Calu3 (cell line): ENCODE measurements at regions of chr1 and their contacts with region 1.

Region 1: GRCh38 chr1:115469703-115470476 is 131.8 kb upstream of the NGF start:
- DNase-seq: peak; percentile 75
- H3K4me3 Mint-ChIP-seq: peak overlapping the region; percentile 45
- H3K27ac Mint-ChIP-seq: peak overlapping the region; percentile 56
- H3K4me1 Mint-ChIP-seq: no peaks in the 10 kb centered on the region
- H3K27me3 Mint-ChIP-seq: peaks cover 18% of the 10 kb centered on the region
- CTCF ChIP-seq: peak; percentile 87

Region 2: GRCh38 chr1:115138968-115139367 is 330.9 kb before region 1 on chr1:
- CTCF ChIA-PET with region 1: interaction called, 7 read pairs
- intact Hi-C with region 1: loop called (anchors 1 kb)
- DNase-seq: peak; percentile 80
- H3K4me3 Mint-ChIP-seq: no peak overlapping the region
- H3K27ac Mint-ChIP-seq: no peak overlapping the region
- H3K4me1 Mint-ChIP-seq: peaks cover 21% of the 10 kb centered on the region
- H3K27me3 Mint-ChIP-seq: peaks cover 14% of the 10 kb centered on the region
- CTCF ChIP-seq: peak; percentile 67

Region 3: GRCh38 chr1:115275212-115275611 is 194.7 kb before region 1 on chr1:
- CTCF ChIA-PET with region 1: interaction called, 6 read pairs
- intact Hi-C with region 1: loop called (anchors 5 kb)
- DNase-seq: no peak
- H3K4me3 Mint-ChIP-seq: no peak overlapping the region
- H3K27ac Mint-ChIP-seq: no peak overlapping the region
- H3K4me1 Mint-ChIP-seq: no peaks in the 10 kb centered on the region
- H3K27me3 Mint-ChIP-seq: peaks cover 60% of the 10 kb centered on the region
- CTCF ChIP-seq: peak; percentile 42

Region 4: DNA sequence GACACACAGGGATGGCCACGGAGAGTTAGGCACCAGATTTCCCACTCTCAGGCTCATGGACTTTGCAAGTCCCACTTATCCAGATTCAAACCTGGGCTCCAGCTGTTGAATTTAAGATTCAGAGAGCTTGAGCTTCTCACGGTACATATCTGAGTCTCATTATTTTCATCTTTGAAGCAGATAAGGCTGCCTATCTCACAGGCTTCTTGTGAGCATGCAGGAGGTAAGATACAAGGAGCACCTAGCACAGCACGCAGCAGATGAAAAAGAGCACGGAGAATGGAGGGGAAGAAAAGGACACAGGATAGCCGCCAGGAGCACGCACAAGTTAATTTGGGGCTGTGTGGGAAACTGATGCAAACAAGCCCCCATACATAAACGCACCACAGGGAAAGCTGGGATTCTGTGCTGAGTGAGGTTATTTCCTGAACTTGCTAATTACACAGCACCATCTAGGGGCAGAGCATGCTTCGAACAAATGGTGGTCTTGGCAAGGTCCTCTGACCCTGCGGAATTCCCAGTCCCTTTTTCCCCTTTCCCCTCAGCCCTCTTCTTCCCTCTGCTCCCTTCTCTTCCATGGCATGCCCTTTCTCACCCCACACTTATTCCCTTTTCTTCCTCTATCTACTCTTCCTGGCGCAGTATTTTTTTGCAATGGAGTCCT is 37.2 kb after region 1 on chr1:
- CTCF ChIA-PET with region 1: no interaction called
- intact Hi-C with region 1: loop called (anchors 1 kb)
- DNase-seq: peak; percentile 14
- H3K4me3 Mint-ChIP-seq: no peak overlapping the region
- H3K27ac Mint-ChIP-seq: no peak overlapping the region
- H3K4me1 Mint-ChIP-seq: no peaks in the 10 kb centered on the region
- H3K27me3 Mint-ChIP-seq: no peaks in the 10 kb centered on the region
- CTCF ChIP-seq: peak; percentile 39

Region 5: DNA sequence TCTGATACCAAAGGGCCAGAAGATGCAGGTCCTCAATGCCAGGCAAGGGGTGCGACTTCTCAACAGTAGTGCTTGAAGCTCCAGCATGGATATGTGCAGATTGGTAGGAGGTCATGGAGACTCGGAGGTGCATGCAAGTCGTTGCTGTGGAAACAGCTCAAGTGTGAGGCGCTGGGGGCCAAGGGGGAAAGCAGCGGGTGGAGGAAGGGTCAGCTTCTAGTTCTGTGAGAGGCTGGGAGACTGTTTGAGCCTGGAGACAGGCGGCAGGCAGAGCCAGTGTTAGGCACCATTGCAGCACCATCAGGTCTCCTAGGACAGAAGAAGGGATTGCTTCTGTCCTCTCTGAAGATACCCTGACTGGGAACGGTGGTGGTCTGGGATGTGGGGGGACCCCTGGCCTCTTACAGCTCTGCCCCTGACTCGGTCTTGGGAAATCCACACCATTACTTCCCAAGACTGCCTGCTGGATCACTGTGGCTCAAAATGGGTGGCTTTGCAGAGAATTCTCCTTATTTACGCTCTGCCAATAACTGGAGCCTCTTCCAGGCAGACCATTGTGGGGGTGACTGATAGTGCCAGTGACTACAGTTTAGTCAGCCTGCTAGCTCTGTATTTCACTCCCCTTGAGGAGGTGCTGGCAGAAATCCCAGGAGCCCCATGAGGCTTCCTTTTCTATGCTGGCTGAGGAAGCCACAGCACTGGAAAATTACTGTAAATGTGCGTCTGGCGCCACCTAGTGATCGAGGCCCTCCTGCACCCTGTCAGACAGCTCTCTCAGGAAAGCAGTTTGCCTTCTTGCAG is 125.6 kb after region 1 on chr1:
- CTCF ChIA-PET with region 1: interaction called, 6 read pairs
- intact Hi-C with region 1: loop called (anchors 10 kb)
- DNase-seq: peak; percentile 80
- H3K4me3 Mint-ChIP-seq: no peak overlapping the region
- H3K27ac Mint-ChIP-seq: no peak overlapping the region
- H3K4me1 Mint-ChIP-seq: no peaks in the 10 kb centered on the region
- H3K27me3 Mint-ChIP-seq: no peaks in the 10 kb centered on the region
- CTCF ChIP-seq: peak; percentile 66